ENCODE measurements at regions of chr4 and their contacts with region 1.

Region 1: GRCh38 chr4:152369902-152370295 is 166.0 kb downstream of the FBXW7 start:
- DNase-seq: no peak
- ATAC-seq: peak; percentile 16; the same call in 1 of the 3 replicates
- H3K4me3 ChIP-seq: no peak overlapping the region
- H3K27ac ChIP-seq: no peak overlapping the region
- H3K4me1 ChIP-seq: peaks cover 16% of the 10 kb centered on the region
- H3K27me3 ChIP-seq: no peaks in the 10 kb centered on the region
- CTCF ChIP-seq: peak in 2 of 3 experiments; percentile 4 to 5; a peak in 2 of 6 replicates
- EP300 ChIP-seq: no peak
- POLR2A ChIP-seq: no peak
- RAD21 ChIP-seq: peak; percentile 28; the same call in 1 of the 2 replicates

Region 2: DNA sequence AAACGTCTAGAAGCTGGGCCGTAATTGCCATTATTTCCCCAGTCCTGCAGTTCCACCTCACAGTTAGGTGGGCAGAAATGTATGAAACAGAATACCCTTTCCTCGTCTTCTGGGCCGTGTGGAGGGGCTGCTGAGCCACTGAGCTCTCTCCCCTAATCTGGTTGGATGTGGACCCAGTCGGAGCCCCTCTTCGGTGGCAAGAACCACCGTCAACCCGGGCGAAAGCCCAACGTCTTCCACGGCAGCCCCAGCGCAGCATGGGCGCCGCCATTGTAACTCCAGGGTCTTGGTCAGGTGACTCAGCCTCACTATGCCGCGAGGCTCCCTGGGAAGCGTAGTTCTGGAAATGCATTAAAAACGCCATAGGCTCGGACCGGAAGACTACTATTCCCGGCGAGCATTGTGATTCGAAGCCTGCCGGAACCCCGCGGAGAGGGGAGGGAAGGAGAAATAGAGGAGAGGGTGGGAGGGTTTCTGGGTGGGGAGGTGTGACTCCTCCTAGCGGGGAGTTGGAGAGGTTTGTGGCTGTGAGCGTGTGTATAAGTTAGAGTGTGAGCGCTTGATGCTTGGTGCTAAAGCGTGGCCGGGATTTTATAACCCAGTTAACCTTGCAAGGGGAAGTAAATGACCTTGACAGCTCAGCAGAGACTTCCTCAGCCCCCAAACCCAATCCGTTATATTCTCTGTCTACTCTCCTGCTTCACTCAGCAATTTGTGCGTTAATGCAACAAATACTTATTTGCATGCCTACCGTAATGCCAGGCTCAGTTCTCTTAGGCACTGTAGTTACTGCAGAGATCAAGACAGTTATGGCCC is 609.0 kb before region 1 on chr4 and contains the start of gene GATB:
- CTCF ChIA-PET with region 1: no interaction called
- POLR2A ChIA-PET with region 1: no interaction called
- RAD21 ChIA-PET with region 1: no interaction called
- SMC1A ChIA-PET with region 1: no interaction called
- in situ Hi-C with region 1: no loop called
- intact Hi-C with region 1: loop called (anchors 10 kb)
- DNase-seq: peak; percentile 92
- ATAC-seq: peak; percentile 100
- H3K4me3 ChIP-seq: peak within 1 kb of the TSS; percentile 91
- H3K27ac ChIP-seq: peak within 1 kb of the TSS; percentile 45
- H3K4me1 ChIP-seq: no peaks in the 10 kb centered on the region
- H3K27me3 ChIP-seq: no peaks in the 10 kb centered on the region
- CTCF ChIP-seq: peak; percentile 47 to 57 (median 52)
- EP300 ChIP-seq: no peak
- POLR2A ChIP-seq: peak; percentile 92
- RAD21 ChIP-seq: peak; percentile 54
- polyA plus RNA-seq, gene GATB: 20.5 to 25.6 TPM

Region 3: GRCh38 chr4:152385551-152385950 is 15.7 kb after region 1 on chr4:
- CTCF ChIA-PET with region 1: interaction called, 20 read pairs
- POLR2A ChIA-PET with region 1: no interaction called
- RAD21 ChIA-PET with region 1: interaction called, 4 read pairs
- SMC1A ChIA-PET with region 1: interaction called, 7 read pairs
- in situ Hi-C with region 1: no loop called
- intact Hi-C with region 1: no loop called
- DNase-seq: no peak
- ATAC-seq: peak; percentile 57
- H3K4me3 ChIP-seq: no peak overlapping the region
- H3K27ac ChIP-seq: no peak overlapping the region
- H3K4me1 ChIP-seq: no peaks in the 10 kb centered on the region
- H3K27me3 ChIP-seq: no peaks in the 10 kb centered on the region
- CTCF ChIP-seq: peak; percentile 39 to 48 (median 42)
- EP300 ChIP-seq: no peak
- POLR2A ChIP-seq: no peak
- RAD21 ChIP-seq: peak; percentile 57

Region 4: DNA sequence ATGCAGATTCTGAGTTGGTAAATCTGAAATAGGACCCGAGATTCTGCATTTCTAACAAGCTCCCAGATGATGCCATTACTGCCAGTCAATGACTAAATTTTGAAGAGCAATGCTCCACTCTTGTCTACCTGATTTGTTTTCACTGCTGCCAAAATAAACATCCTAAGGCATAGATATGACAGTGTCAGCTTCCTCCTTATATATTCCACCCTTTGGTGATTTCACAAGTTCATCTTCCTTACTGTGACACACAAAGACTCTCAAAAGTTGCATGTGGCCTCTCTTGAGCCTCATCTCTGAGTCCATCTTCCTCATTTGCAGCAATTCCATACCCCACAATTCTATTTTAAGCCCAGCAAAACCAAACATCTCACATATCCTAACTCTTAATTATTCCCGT is 55.1 kb after region 1 on chr4:
- CTCF ChIA-PET with region 1: no interaction called
- POLR2A ChIA-PET with region 1: no interaction called
- RAD21 ChIA-PET with region 1: no interaction called
- SMC1A ChIA-PET with region 1: no interaction called
- in situ Hi-C with region 1: no loop called
- intact Hi-C with region 1: no loop called
- DNase-seq: no peak
- ATAC-seq: no peak
- H3K4me3 ChIP-seq: no peak overlapping the region
- H3K27ac ChIP-seq: no peak overlapping the region
- H3K4me1 ChIP-seq: no peaks in the 10 kb centered on the region
- H3K27me3 ChIP-seq: no peaks in the 10 kb centered on the region
- CTCF ChIP-seq: no peak
- EP300 ChIP-seq: no peak
- POLR2A ChIP-seq: no peak
- RAD21 ChIP-seq: no peak

Region 5: DNA sequence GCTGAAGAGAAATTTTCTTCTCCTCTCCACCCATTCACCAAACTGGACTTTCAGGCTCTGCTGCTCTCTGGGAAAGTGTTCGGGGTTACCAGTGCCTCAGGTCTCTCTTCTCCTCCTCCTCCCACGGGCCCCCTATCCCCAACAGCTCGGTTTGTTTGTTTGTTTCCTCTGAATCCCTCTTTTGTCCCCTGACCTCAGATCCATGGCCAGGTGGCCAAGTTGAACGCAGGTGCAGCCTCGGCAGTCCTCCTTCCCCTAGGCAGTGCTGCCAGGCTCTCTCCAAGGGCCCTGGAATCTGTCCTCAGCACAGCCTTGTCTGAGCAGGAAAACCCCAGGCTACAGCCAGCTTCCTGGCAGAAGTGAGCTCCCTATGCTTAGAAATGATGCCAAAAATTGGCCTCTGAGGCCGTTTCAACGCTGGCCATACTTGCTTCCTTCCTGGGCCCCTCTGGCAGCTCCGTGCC is 626.2 kb after region 1 on chr4:
- CTCF ChIA-PET with region 1: no interaction called
- POLR2A ChIA-PET with region 1: no interaction called
- RAD21 ChIA-PET with region 1: no interaction called
- SMC1A ChIA-PET with region 1: no interaction called
- in situ Hi-C with region 1: no loop called
- intact Hi-C with region 1: no loop called
- DNase-seq: no peak
- ATAC-seq: no peak
- H3K4me3 ChIP-seq: no peak overlapping the region
- H3K27ac ChIP-seq: no peak overlapping the region
- H3K4me1 ChIP-seq: no peaks in the 10 kb centered on the region
- H3K27me3 ChIP-seq: peaks cover 0 to 3% of the 10 kb centered on the region in 2 experiments; a peak in 1 of 4 replicates
- CTCF ChIP-seq: no peak
- EP300 ChIP-seq: no peak
- POLR2A ChIP-seq: no peak
- RAD21 ChIP-seq: no peak

Measured in GM12878 (cell line).